Right ventricle myocardium inferior (tissue), 1 donor: ENCODE measurements at regions of chr21 and their contacts with region 1.

Region 1: GRCh38 chr21:16194095-16194787 is 464.5 kb downstream of the USP25 start:
- DNase-seq: peak; percentile 73
- ATAC-seq: peak; percentile 92

Region 2: GRCh38 chr21:16159213-16159970 is 34.8 kb before region 1 on chr21:
- intact Hi-C with region 1: no loop called
- DNase-seq: no peak
- ATAC-seq: no peak

Region 3: DNA sequence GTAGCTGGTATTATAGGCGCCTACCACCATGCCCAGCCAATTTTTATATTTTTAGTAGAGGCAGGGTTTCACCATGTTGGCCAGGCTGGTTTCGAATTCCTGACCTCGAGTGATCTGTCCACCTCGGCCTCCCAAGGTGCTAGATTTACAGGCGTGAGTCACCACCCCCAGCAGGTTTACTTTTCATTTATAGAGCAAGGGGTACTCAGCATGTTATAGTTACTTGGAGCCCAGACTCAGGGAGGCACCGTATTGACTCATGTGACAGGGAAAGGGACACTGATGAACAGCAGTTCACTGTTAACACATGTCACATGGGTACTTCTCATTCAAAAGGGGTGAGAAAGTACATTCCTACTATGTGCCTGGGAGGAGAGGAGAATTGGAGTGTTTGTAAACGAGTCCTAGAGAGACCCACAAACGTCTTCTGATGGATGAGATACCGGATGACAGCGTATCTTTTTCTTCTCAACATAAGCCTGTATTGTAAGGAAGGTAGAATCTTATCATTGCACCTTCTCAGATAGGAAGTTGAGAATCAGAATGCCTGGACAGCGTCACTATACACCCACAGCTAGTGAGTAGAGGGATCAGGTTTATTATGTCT is 45.5 kb after region 1 on chr21:
- intact Hi-C with region 1: no loop called
- DNase-seq: no peak
- ATAC-seq: no peak

Region 4: GRCh38 chr21:16308269-16308668 is 114.0 kb after region 1 on chr21:
- intact Hi-C with region 1: loop called (anchors 5 kb)
- DNase-seq: no peak
- ATAC-seq: peak; percentile 42

Region 5: DNA sequence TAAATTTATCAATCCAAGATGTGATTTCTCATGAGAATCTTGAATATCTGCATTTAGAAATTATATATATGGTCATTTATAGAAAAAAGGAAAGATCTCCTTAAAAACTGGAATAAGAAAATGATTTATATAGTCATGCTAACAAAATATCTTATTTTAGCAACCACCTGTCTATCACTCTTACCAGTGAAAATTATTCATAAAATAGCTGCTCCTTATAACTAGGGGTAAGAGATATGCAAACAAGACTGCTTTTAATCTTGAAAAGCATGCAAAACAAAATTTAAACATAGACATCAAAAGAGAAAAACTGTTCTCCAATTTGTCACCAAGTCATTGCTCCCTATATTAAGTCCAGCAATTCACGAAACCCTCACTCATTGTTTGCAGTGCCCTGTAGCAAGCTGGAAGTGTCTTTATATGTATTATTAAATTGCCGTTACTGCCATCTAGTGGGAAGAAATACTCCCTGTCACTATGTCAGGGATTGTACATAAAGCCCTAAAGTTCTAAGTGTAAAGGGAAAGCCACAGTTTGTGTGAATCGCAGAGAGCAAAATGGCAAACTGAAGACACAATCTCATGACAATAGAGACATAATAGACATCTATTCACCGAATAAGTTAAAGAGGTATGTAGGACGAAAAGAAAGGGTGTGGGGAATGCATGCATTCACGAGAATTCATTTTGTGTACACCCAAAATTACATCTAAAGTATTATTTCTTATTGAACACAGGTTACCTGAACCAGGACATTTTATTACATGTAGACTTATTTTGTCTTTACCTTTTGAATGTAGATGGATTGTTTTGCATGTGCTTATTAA is 136.1 kb after region 1 on chr21:
- intact Hi-C with region 1: loop called (anchors 2 kb)
- DNase-seq: no peak
- ATAC-seq: peak; percentile 98